Cardiac septum (tissue), 1 donor: ENCODE measurements at regions of chr3 and their contacts with region 1.

Region 1: DNA sequence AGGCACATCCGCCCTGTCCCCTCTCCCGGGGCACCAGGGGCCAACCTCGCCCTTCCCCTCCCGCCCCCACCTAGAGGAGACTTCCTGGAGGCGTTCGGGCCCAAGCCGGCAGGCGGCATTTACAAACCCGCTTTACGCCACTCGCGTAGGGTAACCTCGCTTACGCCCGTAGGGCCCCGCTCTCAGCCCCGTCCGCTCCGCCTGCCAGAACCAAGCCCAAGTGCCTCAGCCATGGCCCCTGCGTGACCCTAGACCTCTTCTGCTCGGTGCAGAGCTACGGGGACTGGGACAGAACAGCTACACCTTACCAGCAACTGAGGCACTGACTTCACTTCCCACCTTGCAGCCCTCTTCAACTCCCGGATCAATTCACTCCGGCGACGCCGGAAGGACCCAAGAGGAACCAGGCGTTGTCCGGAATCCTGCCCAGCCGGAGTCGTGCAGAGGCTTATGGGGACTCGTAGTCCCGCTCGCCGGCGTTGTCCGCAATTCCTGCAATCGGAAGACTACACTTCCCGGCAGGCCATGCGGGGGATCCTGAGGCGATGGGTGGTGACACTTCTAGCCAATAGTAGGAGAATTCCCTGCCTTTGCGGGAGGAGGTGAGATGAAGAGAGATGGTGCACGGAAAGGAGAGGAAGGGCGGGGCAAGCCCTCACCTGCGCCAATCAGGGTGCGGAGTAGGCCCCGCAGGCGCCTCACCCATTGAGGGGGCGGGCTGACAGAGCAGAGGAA is at the start of gene PDCD10:
- DNase-seq: peak; percentile 99
- total RNA-seq, gene PDCD10: 42.2 TPM

Region 2: GRCh38 chr3:167814441-167814951 is 79.8 kb after region 1 on chr3:
- intact Hi-C with region 1: loop called (anchors 1 kb)
- DNase-seq: no peak

Region 3: DNA sequence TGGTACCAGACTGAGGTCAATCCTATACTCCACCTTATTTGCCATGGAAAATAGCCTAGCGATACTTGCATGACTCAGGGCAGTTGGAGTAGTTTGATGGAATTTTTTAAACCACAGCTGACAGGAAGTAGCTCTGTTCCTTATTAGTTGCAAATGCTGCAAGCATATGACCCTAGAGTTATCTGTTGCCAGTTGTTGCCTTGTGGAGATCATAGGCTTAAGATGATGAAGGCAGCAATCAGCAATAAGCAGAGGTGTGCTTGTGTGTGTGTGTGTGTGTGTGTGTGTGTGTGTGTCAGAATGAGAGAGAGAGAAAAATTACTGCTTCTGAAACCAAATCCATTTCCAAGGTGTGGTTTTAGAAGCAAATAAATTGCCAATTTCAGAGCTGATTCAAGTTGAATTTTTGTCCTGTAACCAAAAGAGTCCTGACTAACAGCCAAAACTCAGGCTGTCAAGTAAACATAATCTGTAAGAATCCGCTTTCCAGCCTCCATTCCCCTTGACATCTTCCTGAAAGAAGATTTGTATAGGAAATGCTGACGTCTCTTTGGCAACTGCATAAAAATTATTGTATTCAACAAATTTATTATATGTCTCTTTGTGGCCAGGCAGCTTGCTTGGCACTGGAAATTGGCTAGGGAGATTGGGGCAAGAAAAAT is 142.1 kb after region 1 on chr3:
- intact Hi-C with region 1: loop called (anchors 2 kb)
- DNase-seq: no peak

Region 4: DNA sequence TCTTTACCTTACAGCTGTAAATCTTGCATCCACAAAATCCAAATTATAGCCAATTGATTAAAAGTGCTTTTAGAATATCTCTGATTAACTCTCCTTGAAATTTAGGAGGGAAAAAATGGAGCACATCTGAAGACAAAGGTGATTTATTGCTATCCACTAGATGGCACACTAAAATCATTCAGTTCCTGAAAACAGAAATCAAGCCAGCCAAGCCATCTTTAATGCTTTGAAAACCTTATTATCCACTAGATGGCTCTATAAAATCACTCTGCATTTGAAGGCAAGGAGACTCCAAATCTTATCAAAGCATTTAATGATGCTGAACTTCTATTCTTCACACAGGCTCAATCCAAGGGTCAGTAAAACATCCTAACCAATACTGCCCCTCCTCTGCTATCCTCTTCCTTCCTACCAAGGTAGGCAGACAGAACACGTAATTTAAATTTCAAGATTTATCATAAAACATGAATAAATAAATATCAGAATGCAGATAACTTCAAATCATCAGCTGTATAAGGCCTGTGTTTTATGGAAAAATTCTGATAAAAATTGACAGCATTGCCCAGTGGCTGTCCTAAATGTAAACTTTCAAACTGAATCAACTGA is 312.6 kb after region 1 on chr3:
- intact Hi-C with region 1: loop called (anchors 10 kb)
- DNase-seq: no peak

Region 5: DNA sequence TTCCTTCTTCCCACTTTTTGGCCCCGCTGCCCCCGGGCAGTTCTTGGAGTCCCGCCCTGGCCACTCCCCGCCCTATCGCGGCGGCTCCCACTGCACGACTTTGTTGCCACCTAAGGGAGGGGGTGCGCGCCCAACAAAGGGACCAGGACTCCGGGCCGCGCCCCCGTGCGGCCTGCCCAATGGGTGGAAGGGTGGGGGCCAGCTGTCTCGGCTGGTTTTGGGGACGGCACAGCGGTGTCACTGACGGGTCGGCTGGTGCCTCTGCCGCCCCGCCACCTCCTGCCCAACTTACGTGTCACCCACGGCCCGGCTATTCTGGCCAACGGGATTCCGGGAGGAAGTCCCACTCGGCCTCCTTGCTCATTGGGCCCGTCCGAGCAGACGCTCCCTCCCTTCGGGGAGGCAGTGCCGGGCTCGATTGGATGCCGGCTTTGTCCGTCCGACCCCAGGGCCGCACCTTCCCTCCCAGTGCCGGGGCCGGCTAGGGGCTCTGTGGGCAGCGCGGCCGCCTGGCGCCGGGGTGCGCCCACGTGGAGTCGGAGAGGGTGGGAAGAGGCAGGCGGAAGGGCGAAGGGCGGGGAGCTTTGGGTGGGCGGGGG is 361.0 kb after region 1 on chr3 and contains the start of gene GOLIM4:
- intact Hi-C with region 1: loop called (anchors 5 kb)
- DNase-seq: peak; percentile 98
- total RNA-seq, gene GOLIM4: 88.8 TPM